Ovary (tissue), 10 donors: ENCODE measurements at regions of chr12 and their contacts with region 1.

Region 1: GRCh38 chr12:102429211-102430154 is 50.9 kb downstream of the IGF1 start:
- DNase-seq: no peak
- H3K4me3 ChIP-seq: no peak overlapping the region
- H3K27ac ChIP-seq: no peak overlapping the region
- H3K4me1 ChIP-seq: peaks cover 12% of the 10 kb centered on the region
- H3K27me3 ChIP-seq: no peaks in the 10 kb centered on the region
- CTCF ChIP-seq: no peak
- EP300 ChIP-seq: no peak
- POLR2A ChIP-seq: no peak

Region 2: GRCh38 chr12:102444707-102445106 is 15.2 kb after region 1 on chr12:
- intact Hi-C with region 1: loop called in 1 of 4 experiments (anchors 1 kb)
- DNase-seq: no peak
- H3K4me3 ChIP-seq: no peak overlapping the region
- H3K27ac ChIP-seq: no peak overlapping the region
- H3K4me1 ChIP-seq: no peaks in the 10 kb centered on the region
- H3K27me3 ChIP-seq: no peaks in the 10 kb centered on the region
- CTCF ChIP-seq: no peak
- EP300 ChIP-seq: no peak
- POLR2A ChIP-seq: no peak

Region 3: GRCh38 chr12:102474438-102475064 is 45.1 kb after region 1 on chr12:
- intact Hi-C with region 1: no loop called
- DNase-seq: no peak
- H3K4me3 ChIP-seq: no peak overlapping the region
- H3K27ac ChIP-seq: no peak overlapping the region
- H3K4me1 ChIP-seq: peaks cover 6% of the 10 kb centered on the region
- H3K27me3 ChIP-seq: no peaks in the 10 kb centered on the region
- CTCF ChIP-seq: no peak
- EP300 ChIP-seq: no peak
- POLR2A ChIP-seq: no peak